H1 (cell line): ENCODE measurements at regions of chr3 and their contacts with region 1.

Region 1: GRCh38 chr3:53709860-53710674 is 136.2 kb downstream of the CHDH start:
- DNase-seq: peak; percentile 60 to 89
- H3K4me3 ChIP-seq: no peak overlapping the region
- H3K27ac ChIP-seq: no peak overlapping the region
- H3K4me1 ChIP-seq: no peaks in the 10 kb centered on the region
- H3K27me3 ChIP-seq: no peaks in the 10 kb centered on the region; a peak in 1 of 7 replicates
- CTCF ChIP-seq: peak; percentile 67 to 95 (median 86)
- EP300 ChIP-seq: no peak
- POLR2A ChIP-seq: no peak
- RAD21 ChIP-seq: peak; percentile 88 to 95

Region 2: GRCh38 chr3:53375019-53375418 is 335.0 kb before region 1 on chr3:
- CTCF ChIA-PET with region 1: interaction called, 68 read pairs
- POLR2A ChIA-PET with region 1: no interaction called
- DNase-seq: peak; percentile 27 to 89
- H3K4me3 ChIP-seq: no peak overlapping the region
- H3K27ac ChIP-seq: no peak overlapping the region
- H3K4me1 ChIP-seq: peaks cover 0 to 5% (median 0%) of the 10 kb centered on the region in 4 experiments; a peak in 2 of 7 replicates
- H3K27me3 ChIP-seq: no peaks in the 10 kb centered on the region; a peak in 1 of 7 replicates
- CTCF ChIP-seq: peak; percentile 94 to 98 (median 98)
- EP300 ChIP-seq: no peak
- POLR2A ChIP-seq: no peak
- RAD21 ChIP-seq: peak; percentile 99 to 100

Region 3: DNA sequence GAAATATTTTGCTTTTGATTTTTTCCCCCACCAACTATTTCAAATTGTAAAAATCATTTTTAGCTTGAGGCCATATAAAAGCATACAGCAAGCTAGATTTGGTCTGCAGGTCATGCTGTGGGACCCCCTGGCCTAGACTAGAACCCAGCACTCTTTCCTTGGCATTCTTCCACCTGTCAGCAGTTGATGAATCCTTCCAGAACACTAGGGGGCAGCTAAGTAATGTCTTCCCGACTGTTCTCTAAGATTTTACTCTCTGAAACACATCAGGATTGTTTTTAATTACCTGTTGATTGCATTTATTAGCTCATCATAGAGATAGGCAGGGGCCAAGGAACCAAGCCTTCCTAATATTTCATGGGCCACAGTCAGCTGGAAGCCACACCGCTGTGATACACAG is 41.2 kb before region 1 on chr3:
- CTCF ChIA-PET with region 1: interaction called, 46 read pairs
- POLR2A ChIA-PET with region 1: no interaction called
- DNase-seq: no peak
- H3K4me3 ChIP-seq: no peak overlapping the region
- H3K27ac ChIP-seq: no peak overlapping the region
- H3K4me1 ChIP-seq: no peaks in the 10 kb centered on the region
- H3K27me3 ChIP-seq: no peaks in the 10 kb centered on the region
- CTCF ChIP-seq: peak in 2 of 3 experiments; percentile 48 to 57; a peak in 3 of 4 replicates
- EP300 ChIP-seq: no peak
- POLR2A ChIP-seq: no peak
- RAD21 ChIP-seq: peak; percentile 59 to 71

Region 4: DNA sequence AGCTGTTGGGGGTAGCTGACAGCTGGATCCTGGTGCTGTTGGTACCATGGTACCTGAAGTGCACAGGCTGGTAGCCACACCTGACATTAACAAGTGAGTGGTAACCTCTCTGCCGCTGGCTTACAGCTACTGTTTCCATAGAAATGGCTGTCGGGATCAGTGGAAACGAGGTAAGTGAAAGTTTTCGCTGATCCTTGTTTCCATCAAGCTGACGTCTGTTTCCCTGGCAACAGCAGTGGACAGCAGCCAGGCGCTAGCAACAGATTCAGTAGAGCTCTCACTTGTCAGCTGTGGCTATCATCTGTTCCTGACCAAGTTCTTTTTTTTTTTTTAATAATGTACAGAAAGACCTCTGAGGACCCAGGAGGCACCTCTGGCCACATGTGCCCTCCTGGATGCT is 30.0 kb before region 1 on chr3:
- CTCF ChIA-PET with region 1: interaction called, 11 read pairs
- POLR2A ChIA-PET with region 1: no interaction called
- DNase-seq: no peak
- H3K4me3 ChIP-seq: no peak overlapping the region
- H3K27ac ChIP-seq: no peak overlapping the region
- H3K4me1 ChIP-seq: no peaks in the 10 kb centered on the region
- H3K27me3 ChIP-seq: no peaks in the 10 kb centered on the region
- CTCF ChIP-seq: no peak
- EP300 ChIP-seq: no peak
- POLR2A ChIP-seq: no peak
- RAD21 ChIP-seq: no peak

Region 5: DNA sequence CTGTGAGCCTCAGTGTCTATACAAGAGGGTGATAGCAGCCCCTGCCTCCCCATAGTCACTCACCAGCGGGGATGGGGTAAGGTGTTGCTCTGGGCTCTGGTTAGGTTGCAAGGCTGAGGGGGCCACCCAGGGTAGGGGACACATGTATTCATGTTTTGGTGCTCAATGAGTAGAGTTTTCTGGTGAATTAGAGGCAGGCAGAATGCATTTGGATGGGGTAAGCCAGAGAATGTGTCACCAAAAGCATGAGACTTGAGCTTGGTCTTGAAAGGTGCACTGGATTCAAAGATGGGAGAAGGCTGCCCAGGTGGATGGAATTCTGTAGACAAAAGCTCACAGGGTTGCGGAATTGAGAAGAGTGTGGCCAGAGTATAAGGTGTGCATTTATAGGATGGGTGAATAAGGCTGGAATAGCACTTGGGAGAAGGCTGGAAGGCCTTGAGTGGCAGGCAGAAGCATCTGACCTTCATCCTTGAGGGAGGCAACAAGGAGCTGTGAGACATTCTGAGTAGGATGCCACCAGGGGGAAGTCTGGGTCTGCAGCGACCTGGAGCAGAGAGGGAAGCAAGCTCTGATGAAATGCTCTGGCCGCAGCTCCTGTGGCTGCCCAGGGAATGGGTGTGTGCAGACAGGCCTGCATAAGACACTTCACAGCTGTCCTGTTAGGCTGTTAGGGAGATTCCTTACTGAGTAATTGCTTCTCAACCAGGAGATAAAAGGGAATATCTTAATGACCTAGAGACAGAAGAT is 13.5 kb before region 1 on chr3:
- CTCF ChIA-PET with region 1: interaction called, 64 read pairs
- POLR2A ChIA-PET with region 1: interaction called, 3 read pairs
- DNase-seq: peak in 1 of 2 experiments; percentile 34
- H3K4me3 ChIP-seq: no peak overlapping the region
- H3K27ac ChIP-seq: no peak overlapping the region
- H3K4me1 ChIP-seq: 0 out of 7 replicates have a peak, but pooled peaks cover 0 to 3% (median 0%) of the 10 kb centered on the region in 4 experiments
- H3K27me3 ChIP-seq: no peaks in the 10 kb centered on the region
- CTCF ChIP-seq: peak in 2 of 3 experiments; percentile 13 to 21; a peak in 2 of 4 replicates
- EP300 ChIP-seq: no peak
- POLR2A ChIP-seq: no peak
- RAD21 ChIP-seq: peak; percentile 39 to 51

Region 6: GRCh38 chr3:53721187-53722119 is 11.4 kb after region 1 on chr3:
- CTCF ChIA-PET with region 1: interaction called, 19 read pairs
- POLR2A ChIA-PET with region 1: no interaction called
- DNase-seq: no peak
- H3K4me3 ChIP-seq: no peak overlapping the region
- H3K27ac ChIP-seq: no peak overlapping the region
- H3K4me1 ChIP-seq: peaks cover 0 to 3% (median 0%) of the 10 kb centered on the region in 4 experiments; a peak in 1 of 7 replicates
- H3K27me3 ChIP-seq: no peaks in the 10 kb centered on the region
- CTCF ChIP-seq: peak in 1 of 3 experiments; percentile 23; a peak in 1 of 4 replicates
- EP300 ChIP-seq: no peak
- POLR2A ChIP-seq: no peak
- RAD21 ChIP-seq: peak in 1 of 2 experiments; percentile 23; a peak in 2 of 4 replicates

Region 7: GRCh38 chr3:53795176-53795575 is 85.1 kb after region 1 on chr3:
- CTCF ChIA-PET with region 1: no interaction called
- POLR2A ChIA-PET with region 1: no interaction called
- DNase-seq: no peak
- H3K4me3 ChIP-seq: no peak overlapping the region
- H3K27ac ChIP-seq: no peak overlapping the region
- H3K4me1 ChIP-seq: peaks cover 0 to 5% (median 1%) of the 10 kb centered on the region in 4 experiments; a peak in 3 of 7 replicates
- H3K27me3 ChIP-seq: no peaks in the 10 kb centered on the region
- CTCF ChIP-seq: no peak
- EP300 ChIP-seq: no peak
- POLR2A ChIP-seq: no peak
- RAD21 ChIP-seq: no peak